H1 (cell line): ENCODE measurements at regions of chr10 and their contacts with region 1.

Region 1: DNA sequence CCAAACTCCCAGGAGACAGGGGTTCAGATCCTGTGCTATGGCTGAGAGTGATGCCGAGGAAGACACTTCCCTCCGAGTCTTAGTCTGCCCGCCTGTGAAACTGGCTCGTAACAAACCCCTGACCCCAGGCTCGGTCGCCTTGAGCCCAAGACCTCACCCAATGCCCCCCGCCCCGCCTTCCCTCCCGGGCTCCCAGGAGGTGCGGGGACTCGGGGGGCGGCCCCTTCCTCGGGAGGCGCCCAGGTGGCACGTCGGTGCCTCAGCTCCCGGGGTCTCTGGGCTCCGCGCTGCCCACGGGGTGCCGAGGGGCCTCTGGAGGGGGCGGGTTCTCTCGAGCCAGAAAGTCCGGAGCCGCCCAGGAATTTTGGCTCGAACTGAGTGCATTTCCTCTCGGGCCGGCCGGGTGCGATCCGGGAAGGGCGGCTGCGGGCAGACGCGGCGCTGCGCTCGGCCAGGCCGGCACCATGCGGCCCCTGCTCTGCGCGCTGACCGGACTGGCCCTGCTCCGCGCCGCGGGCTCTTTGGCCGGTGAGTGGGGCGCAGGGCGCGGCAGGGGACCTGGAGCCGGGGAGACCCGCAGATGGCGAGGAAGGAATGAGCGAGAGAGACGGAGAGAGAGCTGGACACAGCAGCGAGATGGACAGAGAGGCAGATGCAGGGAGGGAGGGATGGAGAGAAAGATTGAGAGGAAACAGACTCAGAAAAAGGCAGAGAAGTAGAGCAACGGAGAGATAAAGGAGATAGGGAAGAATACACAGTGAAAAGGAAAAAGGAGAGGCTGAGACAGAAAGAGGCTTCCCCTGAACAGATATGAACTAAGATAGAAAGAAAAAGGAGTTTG is at the start of gene PLAC9:
- DNase-seq: peak in 1 of 2 experiments; percentile 70
- H3K4me3 ChIP-seq: peak within 1 kb of the TSS; percentile 42 to 76 (median 50)
- H3K27ac ChIP-seq: no peak within 1 kb of the TSS
- H3K4me1 ChIP-seq: peaks cover 5 to 9% (median 8%) of the 10 kb centered on the region in 4 experiments; a peak in 6 of 7 replicates
- H3K27me3 ChIP-seq: peaks cover 0 to 11% (median 8%) of the 10 kb centered on the region in 4 experiments; a peak in 4 of 7 replicates
- CTCF ChIP-seq: no peak
- EP300 ChIP-seq: no peak
- POLR2A ChIP-seq: no peak; a peak in 1 of 3 replicates
- RAD21 ChIP-seq: no peak
- total RNA-seq, gene PLAC9: 12.4 and 16.7 TPM in 2 replicates

Region 2: DNA sequence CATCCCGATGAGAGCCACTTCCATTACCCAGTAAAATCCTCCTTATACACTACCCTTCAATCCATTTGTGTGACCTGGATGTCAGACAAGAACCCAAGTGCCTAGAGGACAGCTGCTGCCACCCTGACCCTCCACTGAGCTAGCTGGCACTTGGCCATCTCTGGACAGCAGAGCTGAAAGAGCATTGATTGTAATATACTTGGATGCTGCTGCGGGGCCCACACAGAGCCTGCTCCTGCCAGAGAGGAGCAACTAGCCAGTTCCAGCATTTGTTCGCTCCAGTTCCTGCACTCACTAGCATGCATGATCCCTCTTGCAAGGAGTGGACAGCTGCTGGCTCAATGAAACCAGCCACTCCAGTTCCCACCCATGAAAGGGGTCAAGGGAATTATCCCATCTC is 62.5 kb before region 1 on chr10:
- CTCF ChIA-PET with region 1: interaction called, 17 read pairs
- POLR2A ChIA-PET with region 1: interaction called, 4 read pairs
- DNase-seq: peak in 1 of 2 experiments; percentile 52
- H3K4me3 ChIP-seq: no peak overlapping the region
- H3K27ac ChIP-seq: no peak overlapping the region; the same call in 1 of the 2 replicates
- H3K4me1 ChIP-seq: peaks cover 5 to 21% (median 8%) of the 10 kb centered on the region in 4 experiments
- H3K27me3 ChIP-seq: no peaks in the 10 kb centered on the region
- CTCF ChIP-seq: no peak
- EP300 ChIP-seq: no peak
- POLR2A ChIP-seq: no peak
- RAD21 ChIP-seq: no peak

Region 3: GRCh38 chr10:80078448-80079311 is 53.8 kb before region 1 on chr10 and contains the start of gene TMEM254:
- CTCF ChIA-PET with region 1: interaction called, 6 read pairs
- POLR2A ChIA-PET with region 1: interaction called, 12 read pairs
- DNase-seq: peak; percentile 64 to 91
- H3K4me3 ChIP-seq: peak within 1 kb of the TSS; percentile 52 to 80 (median 74)
- H3K27ac ChIP-seq: peak within 1 kb of the TSS; percentile 78
- H3K4me1 ChIP-seq: 0 out of 7 replicates have a peak, but pooled peaks cover 0 to 2% (median 0%) of the 10 kb centered on the region in 4 experiments
- H3K27me3 ChIP-seq: no peaks in the 10 kb centered on the region
- CTCF ChIP-seq: no peak; a peak in 1 of 4 replicates
- EP300 ChIP-seq: no peak
- POLR2A ChIP-seq: peak; percentile 50 to 80
- RAD21 ChIP-seq: peak in 1 of 2 experiments; percentile 4; a peak in 1 of 4 replicates
- total RNA-seq, gene TMEM254: 26.4 and 26.9 TPM in 2 replicates